ENCODE measurements at regions of chr5 and their contacts with region 1.

Region 1: DNA sequence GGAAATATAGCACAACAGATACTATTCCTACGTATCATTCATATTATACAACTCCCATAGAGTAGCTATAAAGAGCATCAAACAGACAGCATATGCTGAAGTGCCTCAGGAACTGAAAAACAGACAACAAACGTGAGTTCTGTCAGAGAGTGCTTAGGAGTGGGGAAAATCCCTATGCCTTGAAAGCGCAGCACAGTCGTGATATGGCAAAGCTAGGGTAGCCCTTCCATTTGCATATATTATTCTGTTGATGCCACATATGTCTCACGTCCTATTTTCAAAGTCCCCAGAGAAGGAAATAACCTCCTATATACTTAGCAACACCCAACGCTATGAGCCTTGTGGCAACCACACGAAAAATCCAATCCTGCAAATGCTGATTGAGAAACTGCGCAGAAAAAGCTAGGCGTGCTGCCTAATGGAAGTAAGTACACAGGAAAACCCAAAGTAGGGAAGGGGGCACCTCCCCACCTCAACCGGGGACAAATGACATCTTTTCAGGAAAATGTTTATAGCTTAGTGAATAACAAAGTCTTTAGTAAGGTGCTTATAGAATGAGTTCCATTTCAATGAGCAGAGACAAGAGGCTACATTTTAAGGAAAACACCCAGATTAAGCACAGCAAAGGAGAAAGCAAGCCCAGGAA is 105.1 kb downstream of the MED10 start:
- DNase-seq: no peak
- H3K4me3 Mint-ChIP-seq: peak overlapping the region; percentile 34
- H3K27ac Mint-ChIP-seq: peak overlapping the region; percentile 91
- H3K4me1 Mint-ChIP-seq: peaks cover 23% of the 10 kb centered on the region
- H3K27me3 Mint-ChIP-seq: peaks cover 2% of the 10 kb centered on the region

Region 2: GRCh38 chr5:6246820-6247437 is 26.3 kb before region 1 on chr5:
- intact Hi-C with region 1: loop called (anchors 1 kb)
- DNase-seq: no peak
- H3K4me3 Mint-ChIP-seq: no peak overlapping the region
- H3K27ac Mint-ChIP-seq: no peak overlapping the region
- H3K4me1 Mint-ChIP-seq: peaks cover 16% of the 10 kb centered on the region
- H3K27me3 Mint-ChIP-seq: no peaks in the 10 kb centered on the region

Region 3: GRCh38 chr5:6261668-6262067 is 11.5 kb before region 1 on chr5:
- intact Hi-C with region 1: loop called (anchors 1 kb)
- DNase-seq: no peak
- H3K4me3 Mint-ChIP-seq: peak overlapping the region; percentile 44
- H3K27ac Mint-ChIP-seq: peak overlapping the region; percentile 88
- H3K4me1 Mint-ChIP-seq: peaks cover 16% of the 10 kb centered on the region
- H3K27me3 Mint-ChIP-seq: no peaks in the 10 kb centered on the region

Measured in activated T-helper 1 cell treated with anti-CD3 and anti-CD28 coated beads, Interleukin-12 subunit alpha, Interleukin-12 subunit beta, Interleukin-2, Interleukin-4 antibody, amounts not matched to agents 30 ng/mL and 10 ng/mL and 1 ng/mL, durations not matched to agents 14 hours and 24 hours and 36 hours (primary cell).